PC-9 (cell line): ENCODE measurements at regions of chr11 and their contacts with region 1.

Region 1: GRCh38 chr11:88739524-88739923 is 326.3 kb downstream of the GRM5 start:
- DNase-seq: no peak
- H3K4me3 ChIP-seq: no peak overlapping the region
- H3K27ac ChIP-seq: no peak overlapping the region
- H3K4me1 ChIP-seq: no peaks in the 10 kb centered on the region
- H3K27me3 ChIP-seq: no peaks in the 10 kb centered on the region
- CTCF ChIP-seq: no peak

Region 2: GRCh38 chr11:88666364-88666763 is 73.2 kb before region 1 on chr11:
- CTCF ChIA-PET with region 1: no interaction called
- POLR2A ChIA-PET with region 1: no interaction called
- intact Hi-C with region 1: no loop called
- DNase-seq: no peak
- H3K4me3 ChIP-seq: no peak overlapping the region
- H3K27ac ChIP-seq: no peak overlapping the region
- H3K4me1 ChIP-seq: no peaks in the 10 kb centered on the region
- H3K27me3 ChIP-seq: no peaks in the 10 kb centered on the region
- CTCF ChIP-seq: no peak

Region 3: DNA sequence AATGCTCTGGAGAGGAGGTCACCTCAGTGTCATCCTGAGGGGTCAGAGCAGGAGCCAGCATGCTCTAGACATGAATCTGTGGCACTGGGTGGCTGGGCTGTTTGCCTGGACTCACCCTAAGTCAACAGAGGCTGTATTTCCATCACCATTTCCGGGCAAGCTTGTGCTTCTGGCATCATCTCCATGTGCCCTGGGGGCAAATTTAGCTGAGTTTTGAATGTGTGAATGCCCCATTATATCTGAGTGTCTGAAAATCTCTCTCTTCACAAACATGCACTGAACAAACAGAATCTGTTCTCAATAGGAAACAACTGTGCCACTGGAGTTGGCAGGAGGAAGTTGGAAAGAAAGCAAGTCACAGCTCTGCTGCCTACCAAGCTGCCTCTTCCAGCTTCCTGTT is 30.0 kb before region 1 on chr11:
- CTCF ChIA-PET with region 1: no interaction called
- POLR2A ChIA-PET with region 1: no interaction called
- intact Hi-C with region 1: loop called (anchors 2 kb)
- DNase-seq: peak; percentile 58 to 66
- H3K4me3 ChIP-seq: no peak overlapping the region
- H3K27ac ChIP-seq: no peak overlapping the region
- H3K4me1 ChIP-seq: peaks cover 12% of the 10 kb centered on the region; the same call in 1 of the 2 replicates
- H3K27me3 ChIP-seq: no peaks in the 10 kb centered on the region
- CTCF ChIP-seq: no peak

Region 4: DNA sequence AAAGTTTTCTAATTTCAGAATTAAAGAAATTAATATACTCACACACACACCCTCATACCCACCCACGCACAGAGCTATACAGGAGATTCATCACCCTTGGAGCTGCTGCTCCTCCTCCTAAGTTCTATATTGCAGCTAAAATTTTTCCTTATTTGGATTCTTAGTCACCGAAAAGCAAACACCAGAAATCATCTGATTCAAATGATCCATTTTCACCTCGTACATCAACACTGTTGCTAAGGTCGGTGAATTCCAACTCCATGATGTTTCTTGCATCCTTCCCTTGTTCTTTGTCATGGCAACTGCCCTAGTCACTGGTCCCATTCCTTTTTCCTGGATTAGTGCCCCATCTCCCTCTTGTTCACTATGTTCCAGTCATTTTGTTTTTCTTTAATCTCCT is 40.1 kb after region 1 on chr11:
- CTCF ChIA-PET with region 1: no interaction called
- POLR2A ChIA-PET with region 1: no interaction called
- intact Hi-C with region 1: no loop called
- DNase-seq: no peak
- H3K4me3 ChIP-seq: no peak overlapping the region
- H3K27ac ChIP-seq: no peak overlapping the region
- H3K4me1 ChIP-seq: no peaks in the 10 kb centered on the region
- H3K27me3 ChIP-seq: no peaks in the 10 kb centered on the region
- CTCF ChIP-seq: no peak